K562 (cell line): ENCODE measurements at regions of chr19 and their contacts with region 1.

Region 1: GRCh38 chr19:19315444-19315843 is 4.9 kb downstream of the SUGP1 start:
- DNase-seq: peak in 1 of 4 experiments; percentile 14
- ATAC-seq: peak; percentile 12; the same call in 1 of the 3 replicates
- H3K4me3 ChIP-seq: no peak overlapping the region
- H3K27ac ChIP-seq: no peak overlapping the region
- H3K4me1 ChIP-seq: peaks cover 4 to 16% of the 10 kb centered on the region in 2 experiments; a peak in 4 of 5 replicates
- H3K27me3 ChIP-seq: no peaks in the 10 kb centered on the region
- CTCF ChIP-seq: peak in 2 of 3 experiments; percentile 7 to 11; a peak in 1 of 6 replicates
- EP300 ChIP-seq: no peak
- POLR2A ChIP-seq: no peak
- RAD21 ChIP-seq: no peak

Region 2: GRCh38 chr19:19280561-19280960 is 34.9 kb before region 1 on chr19:
- CTCF ChIA-PET with region 1: no interaction called
- POLR2A ChIA-PET with region 1: no interaction called
- in situ Hi-C with region 1: no loop called
- intact Hi-C with region 1: no loop called
- DNase-seq: no peak
- ATAC-seq: no peak
- H3K4me3 ChIP-seq: no peak overlapping the region
- H3K27ac ChIP-seq: no peak overlapping the region
- H3K4me1 ChIP-seq: peaks cover 0 to 3% of the 10 kb centered on the region in 2 experiments; a peak in 2 of 5 replicates
- H3K27me3 ChIP-seq: no peaks in the 10 kb centered on the region
- CTCF ChIP-seq: no peak
- EP300 ChIP-seq: no peak
- POLR2A ChIP-seq: no peak
- RAD21 ChIP-seq: no peak

Region 3: DNA sequence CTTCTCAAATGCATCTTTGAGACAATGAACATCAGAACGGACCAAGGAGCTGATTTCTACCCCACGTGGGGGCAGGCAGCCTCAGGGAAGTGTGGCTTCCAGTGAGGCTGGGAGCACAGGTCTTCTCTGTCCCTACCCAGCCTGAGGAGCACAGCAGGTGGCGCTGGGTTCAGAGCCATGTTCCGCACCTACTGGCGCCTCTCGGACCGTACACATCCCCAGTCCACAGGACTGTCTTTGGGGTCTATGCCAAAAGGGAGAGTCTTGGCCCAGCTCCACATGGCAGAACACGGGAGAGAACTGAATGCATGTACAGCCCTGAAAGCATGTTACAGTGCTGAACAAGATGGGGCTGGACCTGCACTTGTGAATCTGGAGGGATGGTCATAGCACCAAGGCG is 17.7 kb before region 1 on chr19:
- CTCF ChIA-PET with region 1: no interaction called
- POLR2A ChIA-PET with region 1: interaction called, 10 read pairs
- in situ Hi-C with region 1: no loop called
- intact Hi-C with region 1: no loop called
- DNase-seq: peak in 2 of 4 experiments; percentile 7 to 12
- ATAC-seq: peak; percentile 54
- H3K4me3 ChIP-seq: no peak overlapping the region
- H3K27ac ChIP-seq: no peak overlapping the region
- H3K4me1 ChIP-seq: peaks cover 0 to 6% of the 10 kb centered on the region in 2 experiments; a peak in 2 of 5 replicates
- H3K27me3 ChIP-seq: no peaks in the 10 kb centered on the region
- CTCF ChIP-seq: no peak
- EP300 ChIP-seq: no peak
- POLR2A ChIP-seq: no peak
- RAD21 ChIP-seq: no peak